Activated CD4-positive, alpha-beta T cell treated with anti-CD3 and anti-CD28 coated beads, Interleukin-2, amount 10 ng/mL, durations not matched to agents 7 days and 5 days (primary cell): ENCODE measurements at regions of chr11 and their contacts with region 1.

Region 1: DNA sequence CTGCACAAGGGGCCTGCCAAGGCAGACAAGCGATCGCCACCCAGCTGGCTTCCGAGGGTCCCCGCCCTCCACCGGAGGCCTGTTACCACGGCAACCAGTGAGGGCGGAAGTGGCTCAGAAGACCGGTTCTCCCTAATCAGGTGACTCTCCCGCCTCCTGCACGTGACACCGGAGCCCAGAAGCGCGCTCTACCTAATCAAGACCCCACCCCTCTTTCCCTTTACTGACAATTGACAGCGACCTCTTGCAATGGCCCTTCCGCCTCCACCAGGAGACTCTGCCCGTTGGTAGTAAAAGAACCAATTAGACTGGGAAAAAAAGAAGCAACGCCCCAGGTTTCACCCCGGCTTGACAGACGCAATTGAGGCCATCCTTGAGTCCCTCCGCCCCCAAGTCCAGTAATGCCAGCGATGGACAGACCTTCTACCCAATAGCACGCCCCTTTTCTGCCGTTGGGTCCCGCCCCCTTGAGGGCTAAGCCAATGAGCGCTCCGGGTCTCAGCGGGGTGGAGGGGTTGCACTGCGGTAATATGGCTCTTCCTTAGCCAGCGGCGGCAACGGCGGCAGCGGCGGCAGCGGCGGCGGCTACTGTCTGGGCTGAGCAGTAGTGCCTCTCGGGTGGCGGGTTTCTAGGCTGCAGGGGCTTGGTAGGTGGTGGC is at the start of gene UVRAG:
- DNase-seq: peak; percentile 99
- H3K4me3 Mint-ChIP-seq: no peak within 1 kb of the TSS
- H3K27ac Mint-ChIP-seq: peak within 1 kb of the TSS; percentile 98
- H3K4me1 Mint-ChIP-seq: peaks cover 16% of the 10 kb centered on the region
- H3K27me3 Mint-ChIP-seq: no peaks in the 10 kb centered on the region
- total RNA-seq, gene UVRAG: 16.8 to 17.0 TPM

Region 2: GRCh38 chr11:75802913-75803820 is 11.6 kb before region 1 on chr11:
- CTCF ChIA-PET with region 1: interaction called, 33 read pairs
- POLR2A ChIA-PET with region 1: interaction called, 3 read pairs
- DNase-seq: peak; percentile 76
- H3K4me3 Mint-ChIP-seq: no peak overlapping the region
- H3K27ac Mint-ChIP-seq: no peak overlapping the region
- H3K4me1 Mint-ChIP-seq: peaks cover 20% of the 10 kb centered on the region
- H3K27me3 Mint-ChIP-seq: peaks cover 9% of the 10 kb centered on the region